ENCODE measurements at regions of chr5 and their contacts with region 1.

Region 1: GRCh38 chr5:61408476-61409168 is 76.6 kb downstream of the ZSWIM6 start:
- DNase-seq: peak; percentile 99
- ATAC-seq: peak; percentile 98

Region 2: GRCh38 chr5:61215996-61216395 is 192.6 kb before region 1 on chr5:
- intact Hi-C with region 1: no loop called
- DNase-seq: no peak
- ATAC-seq: no peak

Region 3: DNA sequence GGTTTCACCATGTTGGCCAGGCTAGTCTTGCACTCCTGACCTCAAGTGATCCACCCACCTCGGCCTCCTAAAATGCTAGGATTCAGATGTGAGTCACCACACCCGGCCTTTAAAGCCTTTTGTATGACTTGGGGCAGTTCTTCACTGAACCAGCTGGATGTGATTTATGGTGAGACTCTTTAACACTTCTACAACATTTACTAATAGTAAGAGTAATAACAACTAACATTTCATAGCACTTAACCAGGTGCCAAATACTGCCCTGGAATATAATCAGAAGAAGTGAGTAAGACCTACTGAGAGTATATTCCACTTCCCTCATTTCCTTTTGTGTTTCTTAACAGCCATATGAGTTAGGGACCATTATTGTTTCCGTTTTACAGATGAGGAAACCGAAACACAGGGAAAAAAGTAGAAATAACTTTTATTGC is 66.5 kb before region 1 on chr5:
- intact Hi-C with region 1: loop called in 1 of 2 experiments (anchors 10 kb)
- DNase-seq: no peak
- ATAC-seq: peak; percentile 19